ENCODE measurements at regions of chr2 and their contacts with region 1.

Region 1: DNA sequence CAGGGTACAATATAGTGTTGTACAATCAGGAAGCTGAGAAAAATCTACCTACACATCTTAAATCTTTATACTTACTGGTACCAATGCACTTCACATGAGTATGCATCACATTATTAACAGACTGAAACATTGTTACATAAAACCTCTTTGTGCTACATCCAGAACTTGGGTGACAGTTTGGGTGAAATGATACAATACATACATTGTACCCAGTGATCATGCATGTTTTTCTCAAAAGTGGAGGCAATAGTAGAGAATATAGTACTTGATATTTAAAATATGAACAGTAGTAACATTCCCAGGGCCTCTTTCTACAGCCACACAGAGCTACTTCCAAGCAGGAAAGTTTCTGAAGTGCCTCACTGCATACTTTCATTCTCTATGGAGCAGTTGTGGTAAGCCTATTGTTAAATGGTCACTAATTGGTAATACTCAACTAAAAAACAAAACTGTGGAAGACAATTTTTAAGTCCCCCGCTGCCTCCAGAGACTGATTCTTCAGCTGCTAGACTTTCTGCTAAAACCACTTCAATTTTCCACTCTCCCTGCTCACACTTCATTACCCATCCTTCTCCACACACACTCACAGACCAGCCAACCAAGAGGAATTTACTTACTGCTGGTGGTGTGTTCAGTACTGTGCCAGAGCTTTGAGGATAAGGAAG is 22.9 kb upstream of the GRB14 start:
- DNase-seq: no peak
- ATAC-seq: no peak
- H3K4me3 ChIP-seq: no peak overlapping the region
- H3K27ac ChIP-seq: no peak overlapping the region
- H3K4me1 ChIP-seq: no peaks in the 10 kb centered on the region
- H3K27me3 ChIP-seq: peaks cover 11% of the 10 kb centered on the region; the same call in 1 of the 2 replicates
- CTCF ChIP-seq: no peak

Region 2: GRCh38 chr2:163934131-163934530 is 710.0 kb before region 1 on chr2:
- CTCF ChIA-PET with region 1: no interaction called
- POLR2A ChIA-PET with region 1: no interaction called
- intact Hi-C with region 1: loop called (anchors 5 kb)
- DNase-seq: no peak
- ATAC-seq: no peak
- H3K4me3 ChIP-seq: no peak overlapping the region
- H3K27ac ChIP-seq: no peak overlapping the region
- H3K4me1 ChIP-seq: no peaks in the 10 kb centered on the region
- H3K27me3 ChIP-seq: peaks cover 37% of the 10 kb centered on the region; the same call in 1 of the 2 replicates
- CTCF ChIP-seq: no peak

Region 3: GRCh38 chr2:164620873-164621626 is 23.1 kb before region 1 on chr2 and contains the start of gene GRB14:
- CTCF ChIA-PET with region 1: no interaction called
- POLR2A ChIA-PET with region 1: no interaction called
- intact Hi-C with region 1: no loop called
- DNase-seq: peak; percentile 31
- ATAC-seq: peak; percentile 63
- H3K4me3 ChIP-seq: peak within 1 kb of the TSS; percentile 62
- H3K27ac ChIP-seq: no peak within 1 kb of the TSS
- H3K4me1 ChIP-seq: no peaks in the 10 kb centered on the region
- H3K27me3 ChIP-seq: peaks cover 66% of the 10 kb centered on the region
- CTCF ChIP-seq: no peak
- total RNA-seq, gene GRB14: 0.63 and 0.84 TPM in 2 replicates

Region 4: GRCh38 chr2:164785457-164785856 is 141.3 kb after region 1 on chr2:
- CTCF ChIA-PET with region 1: no interaction called
- POLR2A ChIA-PET with region 1: no interaction called
- intact Hi-C with region 1: no loop called
- DNase-seq: no peak
- ATAC-seq: no peak
- H3K4me3 ChIP-seq: no peak overlapping the region
- H3K27ac ChIP-seq: no peak overlapping the region
- H3K4me1 ChIP-seq: no peaks in the 10 kb centered on the region
- H3K27me3 ChIP-seq: no peaks in the 10 kb centered on the region
- CTCF ChIP-seq: no peak

Region 5: GRCh38 chr2:164873095-164873908 is 229.1 kb after region 1 on chr2:
- CTCF ChIA-PET with region 1: no interaction called
- POLR2A ChIA-PET with region 1: no interaction called
- intact Hi-C with region 1: no loop called
- DNase-seq: no peak
- ATAC-seq: peak; percentile 73
- H3K4me3 ChIP-seq: no peak overlapping the region
- H3K27ac ChIP-seq: no peak overlapping the region
- H3K4me1 ChIP-seq: 0 out of 2 replicates have a peak, but pooled peaks cover 8% of the 10 kb centered on the region
- H3K27me3 ChIP-seq: no peaks in the 10 kb centered on the region
- CTCF ChIP-seq: no peak

Measured in PC-3 (cell line).